ENCODE measurements at regions of chr21 and their contacts with region 1.

Region 1: DNA sequence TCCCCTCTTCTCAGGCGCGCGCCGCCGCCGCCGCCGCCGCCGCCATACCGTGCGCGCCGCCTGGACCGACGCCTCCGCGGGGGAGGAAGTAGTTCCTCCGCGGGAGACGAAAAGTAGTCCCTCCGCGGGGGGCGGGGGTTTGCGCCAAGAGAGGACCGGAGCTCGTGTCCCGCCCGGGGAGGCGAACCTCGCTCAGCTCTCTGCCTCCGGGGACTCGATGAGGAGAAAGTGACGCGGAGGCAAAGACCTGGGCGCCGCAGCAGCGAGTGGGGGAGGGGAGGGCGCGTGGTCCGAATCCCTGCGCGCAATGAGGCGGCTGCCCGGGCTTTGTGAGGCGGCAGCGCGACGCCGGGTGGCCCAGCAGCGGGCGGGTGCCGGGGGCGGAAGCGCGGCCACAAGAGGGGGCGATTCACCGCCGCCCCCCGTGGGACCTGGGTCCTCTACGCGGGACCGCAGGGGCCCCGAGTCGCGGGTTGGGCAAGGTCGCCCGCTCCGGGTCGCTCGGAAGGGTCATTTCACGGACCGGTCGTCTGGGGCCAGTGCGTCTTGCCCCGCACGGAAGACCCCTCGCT is at the start of gene BRWD1:
- DNase-seq: peak; percentile 89
- ATAC-seq: peak; percentile 63
- H3K4me3 Mint-ChIP-seq: peak within 1 kb of the TSS; percentile 95
- H3K27ac Mint-ChIP-seq: peak within 1 kb of the TSS; percentile 94
- H3K4me1 Mint-ChIP-seq: peaks cover 21% of the 10 kb centered on the region
- H3K27me3 Mint-ChIP-seq: peaks cover 5% of the 10 kb centered on the region
- total RNA-seq, gene BRWD1: 53.5 to 62.9 TPM

Region 2: DNA sequence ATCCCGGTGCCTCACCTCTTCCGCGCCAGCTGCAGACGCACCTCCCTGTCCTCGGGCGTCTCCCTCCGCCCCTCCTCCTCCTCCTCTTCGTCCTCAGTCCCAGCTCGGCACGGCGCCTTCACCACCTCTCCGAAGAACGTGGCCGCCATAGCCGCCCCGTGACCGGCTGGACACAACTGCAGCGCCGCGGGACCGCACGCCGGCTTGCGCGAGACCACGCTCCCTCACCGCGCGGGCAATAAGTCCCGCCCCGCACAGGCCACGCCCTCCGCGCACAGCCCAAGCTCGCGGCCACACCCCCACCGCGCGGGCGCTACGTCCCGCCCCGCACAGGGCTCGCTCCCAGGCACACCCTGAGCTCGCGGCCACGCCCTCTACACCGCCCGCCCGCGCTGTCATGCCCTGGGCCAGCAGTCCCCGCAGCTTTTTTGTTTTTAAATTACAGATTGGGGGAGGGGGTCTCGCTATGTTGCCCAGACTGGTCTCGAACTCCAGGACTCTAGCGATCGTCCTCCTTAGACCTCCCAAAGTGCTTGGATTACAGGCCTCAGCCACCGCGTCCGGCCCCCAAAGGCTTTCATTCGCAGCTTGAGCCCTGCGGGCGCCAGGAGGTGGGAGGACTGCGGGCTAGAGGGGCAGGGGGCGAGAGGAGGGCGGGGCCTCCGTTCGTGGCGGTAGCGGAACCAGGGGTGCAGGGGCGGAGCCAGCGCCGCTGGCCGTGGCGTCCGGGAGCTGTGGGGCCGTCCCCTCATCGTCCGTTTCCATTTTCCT is 130.2 kb before region 1 on chr21 and contains the start of gene PSMG1:
- POLR2A ChIA-PET with region 1: interaction called, 24 read pairs
- DNase-seq: peak; percentile 98
- ATAC-seq: peak; percentile 90
- H3K4me3 Mint-ChIP-seq: peak within 1 kb of the TSS; percentile 97
- H3K27ac Mint-ChIP-seq: peak within 1 kb of the TSS; percentile 97
- H3K4me1 Mint-ChIP-seq: peaks cover 30% of the 10 kb centered on the region
- H3K27me3 Mint-ChIP-seq: no peaks in the 10 kb centered on the region
- total RNA-seq, gene PSMG1: 40.7 to 42.3 TPM

Region 3: DNA sequence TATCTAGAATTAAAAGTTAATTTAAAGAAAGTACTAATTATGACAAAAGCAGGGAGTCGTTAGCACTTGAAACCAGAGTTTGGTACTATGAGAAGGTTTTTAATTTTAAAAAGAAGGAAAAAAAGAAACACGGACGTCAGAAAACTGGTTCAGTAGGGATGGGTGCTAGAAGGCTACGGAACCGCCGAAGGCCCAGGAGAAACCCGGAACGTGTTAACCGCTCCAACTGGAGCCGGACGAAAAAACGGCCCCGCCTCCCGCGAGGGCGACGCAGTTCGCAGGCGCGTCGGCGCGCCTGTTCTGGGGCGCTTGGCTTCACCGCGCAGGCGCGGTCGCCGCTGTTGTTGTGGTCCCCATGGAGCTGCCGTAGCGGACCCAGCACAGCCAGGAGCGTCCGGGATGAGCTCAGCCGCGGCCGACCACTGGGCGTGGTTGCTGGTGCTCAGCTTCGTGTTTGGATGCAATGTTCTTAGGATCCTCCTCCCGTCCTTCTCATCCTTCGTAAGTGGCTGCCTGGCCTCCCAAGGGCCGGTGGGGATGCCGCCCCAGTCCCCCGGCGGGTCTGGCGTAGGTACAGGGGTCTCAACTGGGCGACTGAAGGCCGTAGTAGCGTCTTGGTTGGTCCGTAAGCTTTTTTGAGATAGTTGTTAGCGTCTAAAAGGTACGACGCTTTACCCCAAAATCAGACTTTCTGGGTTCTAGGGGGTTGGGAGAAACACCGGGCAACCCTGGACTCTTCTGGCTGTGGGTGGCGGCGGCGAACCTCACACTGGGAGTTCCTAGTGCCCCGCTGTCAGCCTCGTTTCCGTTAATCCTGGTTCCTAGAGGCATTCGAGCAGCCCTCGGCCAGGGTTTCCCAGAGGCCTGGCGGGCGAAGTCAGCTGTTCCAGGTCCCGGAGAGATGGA is 66.6 kb after region 1 on chr21:
- POLR2A ChIA-PET with region 1: interaction called, 10 read pairs
- DNase-seq: peak; percentile 91
- ATAC-seq: peak; percentile 100
- H3K4me3 Mint-ChIP-seq: peak overlapping the region; percentile 96
- H3K27ac Mint-ChIP-seq: peak overlapping the region; percentile 90
- H3K4me1 Mint-ChIP-seq: peaks cover 18% of the 10 kb centered on the region
- H3K27me3 Mint-ChIP-seq: peaks cover 6% of the 10 kb centered on the region

Region 4: GRCh38 chr21:39441502-39442475 is 128.1 kb after region 1 on chr21:
- POLR2A ChIA-PET with region 1: no interaction called
- DNase-seq: no peak
- ATAC-seq: no peak
- H3K4me3 Mint-ChIP-seq: no peak overlapping the region
- H3K27ac Mint-ChIP-seq: no peak overlapping the region
- H3K4me1 Mint-ChIP-seq: peaks cover 8% of the 10 kb centered on the region
- H3K27me3 Mint-ChIP-seq: peaks cover 21% of the 10 kb centered on the region

Measured in activated naive CD8-positive, alpha-beta T cell treated with anti-CD3 and anti-CD28 coated beads, Interleukin-2, amount 10 ng/mL, durations not matched to agents 7 days and 5 days (primary cell).